ENCODE measurements at regions of chr11 and their contacts with region 1.

Region 1: GRCh38 chr11:31397239-31397834 is 27.7 kb downstream of the DNAJC24 start:
- DNase-seq: no peak
- H3K4me3 ChIP-seq: no peak overlapping the region
- H3K27ac ChIP-seq: no peak overlapping the region
- H3K4me1 ChIP-seq: no peaks in the 10 kb centered on the region
- H3K27me3 ChIP-seq: no peaks in the 10 kb centered on the region
- CTCF ChIP-seq: peak; percentile 33 to 36

Region 2: DNA sequence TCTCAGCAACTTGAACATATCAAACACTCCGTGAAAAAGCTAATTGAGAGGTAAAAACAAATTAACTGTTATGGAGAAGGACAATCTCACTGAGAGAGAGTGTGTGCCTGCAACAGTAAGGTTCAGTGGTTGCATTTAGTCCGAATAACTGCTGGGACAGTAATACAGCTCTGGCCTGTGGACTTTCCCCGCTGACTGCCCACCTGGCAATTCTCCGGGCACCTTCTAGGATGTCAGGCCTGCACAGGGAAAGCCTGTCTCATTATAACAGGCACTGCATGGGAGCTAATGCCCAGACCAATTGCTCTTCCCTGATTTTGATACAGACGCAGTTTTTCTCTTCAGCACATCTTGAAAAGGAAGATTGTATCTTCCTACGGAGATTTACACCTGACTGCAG is 278.8 kb before region 1 on chr11:
- intact Hi-C with region 1: no loop called
- DNase-seq: no peak
- H3K4me3 ChIP-seq: no peak overlapping the region
- H3K27ac ChIP-seq: no peak overlapping the region
- H3K4me1 ChIP-seq: no peaks in the 10 kb centered on the region
- H3K27me3 ChIP-seq: no peaks in the 10 kb centered on the region
- CTCF ChIP-seq: no peak

Region 3: DNA sequence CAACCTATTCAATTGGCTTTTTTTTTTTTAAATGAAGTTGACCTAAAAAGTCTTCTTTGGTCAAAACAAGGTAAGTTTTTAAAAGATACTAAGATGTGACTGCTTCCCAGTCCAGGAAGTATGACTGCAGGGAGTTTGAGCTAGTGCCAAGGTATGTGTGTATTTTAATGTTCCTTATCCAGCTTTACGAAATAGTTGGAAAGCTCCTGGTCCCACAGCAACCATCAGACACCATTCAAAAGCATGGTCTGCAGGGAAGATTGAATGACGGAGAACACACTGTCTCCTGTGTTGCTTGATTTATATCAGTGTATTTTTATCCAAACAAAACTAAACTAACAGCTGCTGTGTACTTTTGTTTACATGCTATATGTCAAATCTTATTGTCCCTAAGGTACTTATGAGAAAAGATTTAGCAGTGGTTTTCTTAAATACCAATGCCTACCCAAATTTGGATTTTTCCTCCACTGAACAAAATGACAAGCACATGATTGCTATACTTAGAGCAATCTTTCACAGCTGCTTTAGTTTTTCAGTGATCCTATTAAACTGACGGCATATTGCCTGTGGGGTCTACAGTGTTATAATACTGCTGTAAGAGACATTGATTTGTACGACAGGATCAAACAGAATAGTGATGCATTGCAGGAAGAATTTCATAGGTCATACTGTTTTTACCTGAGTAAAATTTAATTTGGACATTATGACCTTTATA is 150.7 kb before region 1 on chr11:
- intact Hi-C with region 1: no loop called
- DNase-seq: peak in 1 of 2 donors; percentile 23
- H3K4me3 ChIP-seq: no peak overlapping the region
- H3K27ac ChIP-seq: no peak overlapping the region
- H3K4me1 ChIP-seq: no peaks in the 10 kb centered on the region
- H3K27me3 ChIP-seq: no peaks in the 10 kb centered on the region
- CTCF ChIP-seq: no peak

Region 4: DNA sequence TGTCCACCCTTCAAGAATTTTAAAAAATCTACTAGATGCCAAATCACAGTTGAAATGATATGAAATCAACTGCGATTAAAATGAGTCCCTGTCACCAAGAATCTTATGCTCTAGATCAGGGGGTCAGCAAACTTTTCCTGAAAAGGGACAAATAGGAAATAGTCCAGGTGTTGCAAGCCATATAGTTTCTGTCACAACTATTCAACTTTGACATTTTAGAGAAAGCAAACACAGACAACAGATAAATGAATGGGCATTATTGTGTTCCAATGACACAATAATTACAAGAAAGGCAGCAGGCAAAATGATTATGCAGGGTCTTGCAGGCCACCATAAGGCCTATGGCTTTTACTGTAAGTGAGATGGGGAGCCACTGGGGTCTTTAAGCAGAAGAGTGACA is 53.5 kb after region 1 on chr11:
- intact Hi-C with region 1: loop called (anchors 10 kb)
- DNase-seq: no peak
- H3K4me3 ChIP-seq: no peak overlapping the region
- H3K27ac ChIP-seq: no peak overlapping the region
- H3K4me1 ChIP-seq: no peaks in the 10 kb centered on the region
- H3K27me3 ChIP-seq: no peaks in the 10 kb centered on the region
- CTCF ChIP-seq: no peak

Measured in tibial artery (tissue), 4 donors.